ENCODE measurements at regions of chr20 and their contacts with region 1.

Region 1: GRCh38 chr20:34891166-34892062 is 15.0 kb downstream of the ACSS2 start:
- DNase-seq: no peak
- H3K4me3 Mint-ChIP-seq: peak overlapping the region; percentile 14
- H3K27ac Mint-ChIP-seq: peak overlapping the region; percentile 80
- H3K4me1 Mint-ChIP-seq: peaks cover 45% of the 10 kb centered on the region
- H3K27me3 Mint-ChIP-seq: no peaks in the 10 kb centered on the region

Region 2: DNA sequence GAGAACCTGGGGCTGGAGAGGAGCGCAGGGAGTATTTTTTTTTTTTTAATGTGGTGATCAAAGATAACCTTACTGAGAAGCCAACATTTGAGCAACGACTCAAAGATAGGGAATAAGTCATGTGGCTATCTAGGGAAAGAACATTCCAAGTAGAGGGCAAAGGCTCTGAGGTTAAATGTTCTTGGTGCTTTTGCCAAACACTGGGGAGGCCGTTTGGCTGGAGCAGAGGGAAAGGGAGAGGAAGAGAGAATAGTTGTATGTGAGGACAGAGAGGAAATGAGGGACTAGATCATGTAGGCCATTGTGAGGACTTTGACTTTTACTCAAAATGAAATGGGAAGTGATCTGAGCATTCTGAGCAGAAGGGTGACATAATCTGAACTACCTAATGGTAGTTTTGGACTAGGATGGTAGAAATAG is 12.8 kb after region 1 on chr20:
- intact Hi-C with region 1: loop called (anchors 2 kb)
- DNase-seq: no peak
- H3K4me3 Mint-ChIP-seq: no peak overlapping the region
- H3K27ac Mint-ChIP-seq: no peak overlapping the region
- H3K4me1 Mint-ChIP-seq: peaks cover 24% of the 10 kb centered on the region
- H3K27me3 Mint-ChIP-seq: no peaks in the 10 kb centered on the region

Region 3: DNA sequence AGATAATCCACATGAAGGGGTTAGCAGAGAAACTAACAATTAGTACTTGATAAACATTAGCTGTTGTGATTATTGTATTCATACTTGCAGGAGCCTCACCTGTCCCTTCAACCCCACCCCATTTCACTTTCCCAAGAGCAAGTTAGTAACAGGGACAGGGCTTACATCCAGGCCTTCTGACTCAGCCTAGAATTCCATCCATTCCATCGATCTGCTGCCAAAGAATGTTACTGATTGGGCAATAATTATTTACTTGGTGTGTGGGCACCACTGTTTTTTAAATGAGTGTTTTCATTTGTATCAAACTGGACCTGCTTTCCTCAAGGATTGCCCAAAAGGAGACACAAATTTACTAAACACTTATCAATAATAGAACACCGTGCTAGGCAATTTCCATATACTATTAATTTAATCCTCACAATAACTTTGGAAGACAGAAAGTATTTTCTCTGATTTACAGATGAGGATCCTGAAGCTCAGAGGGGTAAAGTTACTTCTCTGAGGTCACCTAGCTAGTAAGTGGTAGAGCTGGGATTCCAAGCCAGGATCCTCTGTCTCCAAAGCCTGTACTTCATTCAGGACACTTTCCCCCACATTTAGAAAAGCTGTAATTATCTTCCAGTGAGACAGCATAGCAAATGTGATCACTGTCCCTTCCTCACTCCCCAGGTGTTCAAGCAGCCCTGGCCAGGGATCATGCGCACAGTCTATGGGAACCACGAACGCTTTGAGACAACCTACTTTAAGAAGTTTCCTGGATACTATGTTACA is 31.4 kb after region 1 on chr20:
- intact Hi-C with region 1: loop called (anchors 1 kb)
- DNase-seq: no peak
- H3K4me3 Mint-ChIP-seq: no peak overlapping the region
- H3K27ac Mint-ChIP-seq: no peak overlapping the region
- H3K4me1 Mint-ChIP-seq: peaks cover 44% of the 10 kb centered on the region
- H3K27me3 Mint-ChIP-seq: no peaks in the 10 kb centered on the region

Measured in activated T-helper 2 cell treated with anti-CD3 and anti-CD28 coated beads, Interferon-gamma antibody, Interleukin-2, Interleukin-4, amounts not matched to agents 10 μg/mL and 5 μg/mL and 100 μg/mL, durations not matched to agents 14 hours and 24 hours and 36 hours (primary cell).